ENCODE measurements at regions of chr11 and their contacts with region 1.

Region 1: GRCh38 chr11:14544611-14545010 is 24.4 kb upstream of the PSMA1 start:
- DNase-seq: no peak
- H3K4me3 Mint-ChIP-seq: peak overlapping the region; percentile 45
- H3K27ac Mint-ChIP-seq: peak overlapping the region; percentile 91
- H3K4me1 Mint-ChIP-seq: peaks cover 73% of the 10 kb centered on the region
- H3K27me3 Mint-ChIP-seq: no peaks in the 10 kb centered on the region

Region 2: DNA sequence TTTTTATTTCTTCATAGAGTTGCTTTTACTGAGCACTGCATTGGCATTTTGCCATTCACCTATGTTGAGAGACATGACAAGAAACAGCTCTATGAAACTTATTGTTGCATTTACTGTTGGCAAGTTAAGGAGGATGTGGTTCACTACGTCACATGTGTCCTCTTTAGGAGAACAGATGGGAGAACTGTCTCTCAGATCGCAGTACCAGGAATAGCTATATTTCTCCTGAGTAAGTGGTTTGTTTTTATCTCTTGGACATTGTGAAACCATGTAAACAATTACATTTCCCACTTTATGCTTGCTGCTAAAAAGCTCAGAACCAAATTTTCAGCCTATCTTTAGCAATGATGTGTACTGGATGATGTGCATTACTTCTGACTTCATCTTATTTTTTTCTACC is 10.3 kb after region 1 on chr11:
- intact Hi-C with region 1: loop called (anchors 1 kb)
- DNase-seq: peak; percentile 29
- H3K4me3 Mint-ChIP-seq: peak overlapping the region; percentile 38
- H3K27ac Mint-ChIP-seq: peak overlapping the region; percentile 85
- H3K4me1 Mint-ChIP-seq: peaks cover 64% of the 10 kb centered on the region
- H3K27me3 Mint-ChIP-seq: no peaks in the 10 kb centered on the region